Head of caudate nucleus (tissue), 42 donors: ENCODE measurements at regions of chr20 and their contacts with region 1.

Region 1: GRCh38 chr20:58236612-58237330 is 8.3 kb upstream of the ANKRD60 start:
- DNase-seq: peak; percentile 59 to 92 (median 82)

Region 2: DNA sequence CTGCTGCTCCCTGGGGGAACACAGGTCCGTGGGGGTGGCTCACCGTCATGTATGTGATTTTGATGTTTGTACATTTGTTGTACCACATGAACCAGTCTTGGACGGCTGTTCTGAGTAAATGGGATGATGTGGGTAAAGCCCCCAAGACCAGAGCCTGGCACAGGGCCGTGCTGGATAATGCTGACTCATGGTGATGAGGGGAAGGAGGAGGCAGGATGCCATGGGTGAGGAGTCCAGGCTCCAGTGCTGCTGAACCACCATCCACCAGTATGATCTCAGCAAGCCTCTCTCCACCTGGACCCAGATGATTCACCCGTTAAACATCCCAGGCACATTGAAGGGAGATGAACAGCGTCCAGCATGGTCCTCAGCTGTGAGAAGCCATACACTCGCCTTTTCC is 288.0 kb after region 1 on chr20:
- intact Hi-C with region 1: no loop called
- DNase-seq: no peak

Region 3: GRCh38 chr20:58839991-58840759 is 603.4 kb after region 1 on chr20:
- intact Hi-C with region 1: loop called (anchors 10 kb)
- DNase-seq: no peak